Activated CD8-positive, alpha-beta T cell treated with anti-CD3 and anti-CD28 coated beads for 36 hours (primary cell): ENCODE measurements at regions of chr6 and their contacts with region 1.

Region 1: GRCh38 chr6:143510991-143511891 is at the start of gene FUCA2:
- DNase-seq: peak; percentile 73
- ATAC-seq: peak; percentile 79
- H3K4me3 Mint-ChIP-seq: peak within 1 kb of the TSS; percentile 85
- H3K27ac Mint-ChIP-seq: peak within 1 kb of the TSS; percentile 94
- H3K4me1 Mint-ChIP-seq: peaks cover 20% of the 10 kb centered on the region
- H3K27me3 Mint-ChIP-seq: no peaks in the 10 kb centered on the region
- CTCF ChIP-seq: no peak
- total RNA-seq, gene FUCA2: 6.6 to 8.5 TPM

Region 2: GRCh38 chr6:142966294-142966693 is 544.9 kb before region 1 on chr6:
- CTCF ChIA-PET with region 1: no interaction called
- POLR2A ChIA-PET with region 1: no interaction called
- intact Hi-C with region 1: no loop called
- DNase-seq: no peak
- ATAC-seq: peak; percentile 27
- H3K4me3 Mint-ChIP-seq: no peak overlapping the region
- H3K27ac Mint-ChIP-seq: no peak overlapping the region
- H3K4me1 Mint-ChIP-seq: no peaks in the 10 kb centered on the region
- H3K27me3 Mint-ChIP-seq: no peaks in the 10 kb centered on the region
- CTCF ChIP-seq: no peak

Region 3: GRCh38 chr6:143450453-143451371 is 60.5 kb before region 1 on chr6 and contains the starts of genes ADAT2 and PEX3:
- CTCF ChIA-PET with region 1: interaction called, 3 read pairs
- POLR2A ChIA-PET with region 1: interaction called, 10 read pairs
- intact Hi-C with region 1: no loop called
- DNase-seq: peak; percentile 97
- ATAC-seq: peak; percentile 93
- H3K4me3 Mint-ChIP-seq: peak within 1 kb of the TSS; percentile 88
- H3K27ac Mint-ChIP-seq: peak within 1 kb of the TSS; percentile 99
- H3K4me1 Mint-ChIP-seq: peaks cover 43% of the 10 kb centered on the region
- H3K27me3 Mint-ChIP-seq: no peaks in the 10 kb centered on the region
- CTCF ChIP-seq: no peak
- total RNA-seq, gene ADAT2: 35.9 to 40.8 TPM
- total RNA-seq, gene PEX3: 24.9 to 33.6 TPM

Region 4: DNA sequence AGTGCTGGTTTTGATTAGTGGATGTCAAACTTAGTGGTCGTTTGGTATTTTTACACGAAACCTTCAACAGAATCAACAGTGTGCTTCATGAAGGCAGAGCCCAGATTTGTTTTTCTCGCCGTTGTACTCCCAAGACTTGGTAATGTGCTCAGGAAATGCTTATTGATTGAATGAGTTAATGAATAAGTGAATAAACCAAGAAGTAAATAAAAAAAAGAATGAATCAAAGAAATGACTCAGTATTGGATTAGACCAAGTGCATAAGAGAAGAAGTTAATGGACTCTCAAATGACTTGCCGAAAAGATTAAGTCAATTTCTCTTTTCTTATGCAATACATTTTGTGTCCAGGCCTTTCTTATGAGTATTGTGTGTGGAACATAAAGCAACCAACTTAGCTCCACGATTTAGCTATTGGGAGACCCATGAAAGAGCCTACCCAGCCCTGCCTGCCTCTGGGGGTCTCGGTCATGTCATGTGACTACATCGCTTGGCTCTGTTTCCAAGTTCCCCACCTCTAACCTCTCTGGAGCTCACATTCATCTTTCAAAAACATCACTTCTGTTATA is 10.9 kb after region 1 on chr6:
- CTCF ChIA-PET with region 1: interaction called, 18 read pairs
- POLR2A ChIA-PET with region 1: interaction called, 4 read pairs
- intact Hi-C with region 1: no loop called
- DNase-seq: no peak
- ATAC-seq: no peak
- H3K4me3 Mint-ChIP-seq: no peak overlapping the region
- H3K27ac Mint-ChIP-seq: no peak overlapping the region
- H3K4me1 Mint-ChIP-seq: no peaks in the 10 kb centered on the region
- H3K27me3 Mint-ChIP-seq: no peaks in the 10 kb centered on the region
- CTCF ChIP-seq: no peak

Region 5: DNA sequence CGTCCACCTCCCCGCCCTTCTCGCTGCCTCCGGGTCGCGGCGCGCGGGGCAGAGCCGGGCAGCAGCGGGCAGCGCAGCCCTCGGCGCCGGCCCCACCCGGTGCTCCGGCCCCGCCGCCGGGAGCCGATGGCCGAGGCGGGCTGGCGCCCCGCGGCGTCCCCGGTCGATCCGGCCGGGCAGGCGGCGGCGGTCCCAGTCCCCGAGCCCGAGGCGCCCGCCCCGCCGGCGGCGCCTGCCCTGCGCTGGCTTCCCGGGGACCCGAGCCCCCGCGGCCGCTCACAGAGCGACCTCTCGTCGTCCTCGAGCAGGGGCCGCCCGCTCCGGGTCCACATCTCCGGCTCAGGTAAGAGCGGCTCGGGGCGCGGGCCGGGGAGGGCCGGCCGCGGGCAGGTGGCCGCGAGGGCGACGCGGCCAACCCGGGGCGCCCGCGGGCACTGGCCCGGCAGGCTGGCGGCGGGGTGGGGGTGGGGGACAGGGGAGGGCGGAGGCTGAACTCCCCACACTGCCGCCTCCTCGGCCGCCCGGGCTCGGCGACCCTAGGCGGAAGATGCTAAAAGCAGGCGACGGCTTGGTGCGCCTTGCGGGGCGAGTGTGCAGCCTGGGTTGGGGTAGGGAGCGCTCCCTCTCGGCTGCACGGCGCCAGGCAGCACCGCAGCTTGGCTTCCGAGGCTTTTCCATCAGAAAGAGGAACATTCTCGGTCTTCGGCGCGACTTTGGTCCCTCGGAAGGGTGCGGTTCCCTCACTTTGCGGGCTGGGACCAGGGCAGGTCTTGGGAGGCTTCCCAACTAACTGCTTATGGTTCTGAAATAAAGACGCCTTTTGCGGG is 25.8 kb after region 1 on chr6:
- CTCF ChIA-PET with region 1: interaction called, 10 read pairs
- POLR2A ChIA-PET with region 1: interaction called, 4 read pairs
- intact Hi-C with region 1: no loop called
- DNase-seq: peak; percentile 72
- ATAC-seq: peak; percentile 79
- H3K4me3 Mint-ChIP-seq: peak overlapping the region; percentile 80
- H3K27ac Mint-ChIP-seq: peak overlapping the region; percentile 67
- H3K4me1 Mint-ChIP-seq: peaks cover 25% of the 10 kb centered on the region
- H3K27me3 Mint-ChIP-seq: no peaks in the 10 kb centered on the region
- CTCF ChIP-seq: no peak

Region 6: DNA sequence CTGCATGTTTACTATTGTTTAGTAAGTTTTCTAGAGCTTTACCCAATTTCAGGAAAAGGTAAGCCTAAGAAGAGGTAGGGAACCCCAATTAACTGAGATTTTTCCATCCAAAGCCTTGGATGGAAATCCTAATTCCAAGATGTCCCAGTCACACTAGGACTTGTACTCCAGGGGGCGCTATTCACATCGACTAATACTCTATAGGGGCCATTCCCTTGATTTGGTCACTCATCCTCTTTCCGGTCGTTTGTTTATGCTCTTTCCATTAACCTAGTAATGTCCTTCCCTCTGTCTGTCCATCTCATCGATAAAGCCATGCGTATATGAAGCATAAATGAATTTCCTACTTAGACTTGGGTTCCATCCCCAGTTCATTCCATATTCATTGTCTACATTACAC is 81.1 kb after region 1 on chr6:
- CTCF ChIA-PET with region 1: no interaction called
- POLR2A ChIA-PET with region 1: no interaction called
- intact Hi-C with region 1: no loop called
- DNase-seq: no peak
- ATAC-seq: no peak
- H3K4me3 Mint-ChIP-seq: no peak overlapping the region
- H3K27ac Mint-ChIP-seq: no peak overlapping the region
- H3K4me1 Mint-ChIP-seq: no peaks in the 10 kb centered on the region
- H3K27me3 Mint-ChIP-seq: no peaks in the 10 kb centered on the region
- CTCF ChIP-seq: peak; percentile 48